Activated naive CD4-positive, alpha-beta T cell treated with anti-CD3 and anti-CD28 coated beads for 36 hours (primary cell): ENCODE measurements at regions of chr1 and their contacts with region 1.

Region 1: DNA sequence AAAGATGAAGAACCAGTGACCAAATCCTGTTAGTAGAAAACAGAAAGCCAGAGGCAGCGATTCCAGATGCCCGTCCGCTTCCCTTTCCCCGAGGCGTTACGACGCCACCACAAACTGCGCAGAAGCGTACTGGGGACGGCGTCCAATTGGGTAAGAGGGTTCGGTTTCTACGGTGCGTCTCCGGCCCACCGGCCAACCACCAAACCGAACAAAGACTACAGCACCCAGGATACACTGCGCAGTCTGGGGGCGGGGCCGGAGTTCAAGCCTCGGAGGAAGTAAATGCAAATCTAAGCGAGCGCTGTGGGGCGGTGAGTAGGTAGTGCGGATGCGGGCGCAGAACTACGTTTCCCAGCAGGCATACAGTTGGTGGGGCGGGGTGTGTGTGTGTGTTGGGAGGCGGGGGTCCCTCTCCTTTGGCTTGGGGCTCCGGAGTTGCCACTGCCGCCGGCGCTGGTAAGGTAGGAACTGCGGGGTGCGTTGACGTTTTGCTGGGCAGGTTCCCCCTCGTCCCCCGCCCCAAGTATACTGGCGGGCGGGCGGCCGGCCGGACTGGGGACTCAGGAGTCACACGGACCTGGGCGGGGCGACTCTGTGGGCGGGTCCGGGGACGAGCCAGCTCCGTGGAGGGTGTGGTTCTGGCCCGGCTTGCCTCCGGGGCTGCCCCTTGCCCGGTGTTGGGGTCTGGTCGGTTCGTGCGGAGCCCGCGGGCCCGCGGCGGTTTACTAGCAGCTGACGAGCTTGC is at the starts of genes SWT1 and TRMT1L:
- DNase-seq: peak; percentile 98
- H3K4me3 Mint-ChIP-seq: peak within 1 kb of the TSS; percentile 92
- H3K27ac Mint-ChIP-seq: peak within 1 kb of the TSS; percentile 91
- H3K4me1 Mint-ChIP-seq: peaks cover 44% of the 10 kb centered on the region
- H3K27me3 Mint-ChIP-seq: no peaks in the 10 kb centered on the region
- total RNA-seq, gene SWT1: 1.7 to 2.9 TPM
- total RNA-seq, gene TRMT1L: 26.6 to 28.7 TPM

Region 2: DNA sequence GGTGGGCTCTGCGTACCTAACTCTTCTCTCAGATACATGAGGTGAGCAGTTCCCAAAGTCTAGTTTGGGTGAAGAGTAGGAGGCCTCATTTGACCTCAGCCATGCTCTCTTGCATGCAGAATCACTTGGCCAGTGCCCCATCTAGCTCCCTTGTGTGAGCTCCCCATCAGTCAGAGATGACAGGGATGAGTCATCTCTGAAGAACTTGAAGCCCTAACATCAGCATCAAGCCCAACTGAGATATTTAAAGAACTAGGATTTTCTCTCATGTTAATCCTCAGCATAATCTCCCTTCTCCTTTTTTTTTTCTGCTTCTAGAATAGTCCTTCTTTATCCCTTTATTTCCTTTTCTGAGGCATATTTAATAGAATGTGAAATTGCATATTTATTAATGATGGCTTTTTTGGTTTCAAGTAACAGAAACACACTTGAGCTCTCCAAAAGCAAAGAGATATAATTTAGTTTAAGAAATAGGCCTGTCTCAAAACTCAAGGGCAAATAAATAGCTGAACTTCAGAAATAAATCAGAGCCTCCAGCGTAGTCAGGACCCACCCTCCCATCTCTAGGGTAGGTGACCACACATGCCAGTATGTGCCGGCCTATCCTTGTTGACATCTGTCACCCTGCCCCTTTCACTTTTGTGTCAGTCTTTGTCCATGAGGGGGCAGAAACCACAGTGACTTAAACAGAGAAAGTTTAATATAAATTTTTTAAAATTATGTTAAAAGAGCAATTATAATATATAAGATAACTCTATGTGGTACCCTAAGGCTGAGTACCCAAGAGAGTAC is 993.2 kb before region 1 on chr1:
- CTCF ChIA-PET with region 1: no interaction called
- intact Hi-C with region 1: loop called (anchors 2 kb)
- DNase-seq: no peak
- H3K4me3 Mint-ChIP-seq: no peak overlapping the region
- H3K27ac Mint-ChIP-seq: no peak overlapping the region
- H3K4me1 Mint-ChIP-seq: no peaks in the 10 kb centered on the region
- H3K27me3 Mint-ChIP-seq: peaks cover 1% of the 10 kb centered on the region

Region 3: DNA sequence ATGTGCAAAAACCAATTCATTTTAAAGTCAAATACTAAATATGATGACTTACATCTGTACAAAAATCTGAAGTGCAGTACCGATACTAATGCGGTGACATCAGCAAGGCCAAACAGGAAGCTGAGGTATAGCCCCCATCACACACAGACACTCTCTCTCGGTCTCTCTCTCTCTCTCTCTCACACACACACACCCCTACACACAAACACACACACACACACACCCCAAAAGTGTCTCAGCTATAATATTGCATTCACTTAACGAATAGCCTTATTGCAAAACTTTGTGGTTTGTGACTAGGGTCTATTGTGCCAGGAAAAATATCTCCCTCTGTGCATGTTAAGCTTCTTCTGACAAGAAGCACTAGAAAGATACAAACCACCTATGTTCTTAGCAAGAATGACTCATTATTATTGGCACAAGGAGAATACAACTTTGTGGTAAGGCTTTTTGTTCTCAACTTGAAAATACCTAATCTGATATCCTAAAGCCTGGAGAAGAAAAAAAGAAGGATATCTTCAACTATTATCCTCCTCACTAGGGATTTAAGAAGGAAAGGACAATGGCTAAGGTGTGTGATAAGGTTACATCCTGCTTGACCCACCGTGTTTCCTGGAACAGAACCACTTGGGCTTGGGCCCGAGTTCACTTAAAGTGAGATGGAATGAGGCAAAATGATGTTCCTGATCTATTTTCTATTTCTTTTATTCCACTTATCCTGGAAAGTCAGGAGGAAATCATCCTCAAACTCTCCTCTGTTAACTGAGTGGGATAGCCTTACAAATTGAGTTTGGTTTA is 289.8 kb before region 1 on chr1:
- CTCF ChIA-PET with region 1: no interaction called
- intact Hi-C with region 1: loop called (anchors 1 kb)
- DNase-seq: peak; percentile 80
- H3K4me3 Mint-ChIP-seq: peak overlapping the region; percentile 14
- H3K27ac Mint-ChIP-seq: peak overlapping the region; percentile 94
- H3K4me1 Mint-ChIP-seq: peaks cover 32% of the 10 kb centered on the region
- H3K27me3 Mint-ChIP-seq: peaks cover 10% of the 10 kb centered on the region

Region 4: GRCh38 chr1:185059950-185060571 is 97.0 kb before region 1 on chr1:
- CTCF ChIA-PET with region 1: no interaction called
- intact Hi-C with region 1: loop called (anchors 1 kb)
- DNase-seq: no peak
- H3K4me3 Mint-ChIP-seq: no peak overlapping the region
- H3K27ac Mint-ChIP-seq: no peak overlapping the region
- H3K4me1 Mint-ChIP-seq: peaks cover 55% of the 10 kb centered on the region
- H3K27me3 Mint-ChIP-seq: no peaks in the 10 kb centered on the region

Region 5: GRCh38 chr1:185108321-185108720 is 48.7 kb before region 1 on chr1:
- CTCF ChIA-PET with region 1: no interaction called
- intact Hi-C with region 1: no loop called
- DNase-seq: no peak
- H3K4me3 Mint-ChIP-seq: no peak overlapping the region
- H3K27ac Mint-ChIP-seq: no peak overlapping the region
- H3K4me1 Mint-ChIP-seq: no peaks in the 10 kb centered on the region
- H3K27me3 Mint-ChIP-seq: no peaks in the 10 kb centered on the region

Region 6: DNA sequence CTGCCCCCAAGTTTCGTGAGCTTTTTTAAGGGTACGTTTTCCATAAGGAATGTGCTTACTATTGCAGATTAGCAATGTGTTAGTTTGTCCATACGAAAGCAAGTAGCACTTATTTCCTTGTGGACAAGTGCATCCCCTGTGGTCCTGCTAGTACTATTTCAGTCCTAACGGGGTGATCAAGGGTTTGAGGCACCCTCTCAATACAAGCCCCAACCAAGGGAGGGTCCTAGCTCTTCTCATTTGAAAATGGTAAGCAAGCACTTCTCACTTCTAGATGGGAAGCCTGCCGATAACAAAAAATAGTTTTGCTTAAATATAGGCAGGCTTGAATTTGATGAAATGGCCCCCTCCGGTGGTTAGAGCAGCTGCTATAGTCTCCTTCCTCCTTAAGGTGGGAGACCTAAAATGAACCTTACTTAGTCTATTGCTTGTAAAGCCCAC is 513.2 kb after region 1 on chr1:
- CTCF ChIA-PET with region 1: no interaction called
- intact Hi-C with region 1: loop called (anchors 5 kb)
- DNase-seq: peak; percentile 69
- H3K4me3 Mint-ChIP-seq: no peak overlapping the region
- H3K27ac Mint-ChIP-seq: no peak overlapping the region
- H3K4me1 Mint-ChIP-seq: peaks cover 14% of the 10 kb centered on the region
- H3K27me3 Mint-ChIP-seq: no peaks in the 10 kb centered on the region